CD4-positive, alpha-beta memory T cell (primary cell): ENCODE measurements at regions of chr3 and their contacts with region 1.

Region 1: DNA sequence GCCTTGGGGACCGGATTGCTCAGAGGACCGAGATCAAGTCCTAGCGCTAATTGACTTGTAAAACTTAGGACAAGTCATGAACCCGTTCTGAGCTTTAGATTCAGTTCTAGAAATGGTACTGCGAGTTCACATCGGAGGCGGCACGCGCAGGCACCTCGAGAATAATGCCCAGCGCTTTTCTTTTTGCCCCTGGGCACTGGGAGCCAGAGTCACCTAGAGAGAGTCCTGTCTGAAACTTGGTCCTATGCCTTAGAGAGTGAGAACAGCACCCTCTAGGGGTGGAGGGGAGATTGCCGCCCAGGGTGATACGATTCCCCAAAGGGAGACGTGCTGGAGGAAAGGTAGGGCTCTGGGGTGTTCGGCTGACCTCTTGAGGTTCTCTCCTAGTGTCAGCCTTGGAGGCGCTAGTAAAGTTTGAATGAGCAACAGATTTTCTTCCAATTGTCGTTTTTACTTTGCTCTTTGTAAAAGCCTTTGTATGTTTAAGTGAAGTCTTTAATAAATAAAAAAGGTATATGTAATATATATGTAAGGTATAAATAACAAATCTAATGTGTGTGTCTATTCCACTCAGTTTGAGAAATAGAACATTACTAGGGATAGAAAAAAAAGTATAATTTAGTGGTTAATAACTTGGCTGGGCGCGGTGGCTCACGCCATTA is 826 bp downstream of the EEF1AKMT4 start:
- DNase-seq: peak; percentile 82 to 92 (median 86)
- H3K4me3 ChIP-seq: peak overlapping the region; percentile 92 to 99
- H3K4me3 Mint-ChIP-seq: peak overlapping the region; percentile 88 to 99 (median 96)
- H3K27ac ChIP-seq: peak overlapping the region; percentile 66
- H3K27ac Mint-ChIP-seq: peak overlapping the region; percentile 46 to 100 (median 90)
- H3K4me1 ChIP-seq: peaks cover 11% of the 10 kb centered on the region
- H3K4me1 Mint-ChIP-seq: peaks cover 8 to 20% (median 12%) of the 10 kb centered on the region in 4 donors
- H3K27me3 ChIP-seq: no peaks in the 10 kb centered on the region
- H3K27me3 Mint-ChIP-seq: peaks cover 0 to 4% of the 10 kb centered on the region in 2 donors

Region 2: GRCh38 chr3:183099026-183099837 is 1151.1 kb before region 1 on chr3 and contains the start of gene MCCC1:
- CTCF ChIA-PET with region 1: no interaction called
- POLR2A ChIA-PET with region 1: no interaction called
- intact Hi-C with region 1: loop called (anchors 2 kb)
- DNase-seq: peak; percentile 96 to 99 (median 97)
- H3K4me3 ChIP-seq: peak within 1 kb of the TSS; percentile 85 to 96
- H3K4me3 Mint-ChIP-seq: peak within 1 kb of the TSS; percentile 96 to 99 (median 97)
- H3K27ac ChIP-seq: peak within 1 kb of the TSS; percentile 81
- H3K27ac Mint-ChIP-seq: peak within 1 kb of the TSS; percentile 97 to 98 (median 97)
- H3K4me1 ChIP-seq: peaks cover 22% of the 10 kb centered on the region
- H3K4me1 Mint-ChIP-seq: peaks cover 17 to 42% (median 30%) of the 10 kb centered on the region in 4 donors
- H3K27me3 ChIP-seq: no peaks in the 10 kb centered on the region
- H3K27me3 Mint-ChIP-seq: no peaks in the 10 kb centered on the region
- total RNA-seq, gene MCCC1: 27.0 to 29.9 TPM

Region 3: DNA sequence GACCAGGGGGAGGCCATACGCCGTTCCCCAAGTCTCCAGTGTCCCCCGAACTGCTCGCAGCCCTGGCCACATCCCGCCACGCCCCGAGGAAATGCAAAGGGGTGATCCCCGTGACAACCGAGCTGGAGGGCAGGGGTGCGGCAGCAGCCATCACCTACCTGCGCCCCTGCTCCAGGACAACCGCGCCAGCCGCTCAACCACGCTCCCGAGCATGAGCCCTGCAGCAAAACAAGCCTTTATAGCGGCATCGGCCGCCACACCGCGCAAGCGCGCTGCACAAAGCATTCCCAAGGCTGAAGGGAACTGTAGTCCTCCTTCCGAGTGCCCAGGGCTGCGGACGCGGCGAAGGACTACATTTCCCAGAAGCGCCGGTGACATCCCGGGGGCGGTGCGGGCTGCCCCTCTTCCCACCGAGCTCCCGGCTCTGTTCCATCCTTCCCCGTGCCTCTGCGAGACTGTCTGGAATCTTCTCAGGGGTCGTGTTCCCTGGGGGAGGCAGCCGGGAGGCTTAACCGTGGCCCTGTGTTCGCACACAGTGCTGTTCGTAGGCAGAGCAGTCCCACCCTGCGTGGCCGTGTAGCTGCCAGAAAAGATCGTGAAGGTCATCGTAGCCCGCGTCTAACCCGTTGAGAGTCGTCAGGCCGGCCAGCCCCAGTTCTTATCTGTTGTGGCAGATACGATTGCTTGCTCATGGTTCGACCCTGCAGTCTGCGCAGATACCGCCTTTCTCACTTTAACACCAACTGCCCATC is 232.4 kb before region 1 on chr3 and contains the start of gene ABCC5:
- CTCF ChIA-PET with region 1: interaction called, 3 read pairs
- POLR2A ChIA-PET with region 1: no interaction called
- intact Hi-C with region 1: loop called (anchors 5 kb)
- DNase-seq: peak; percentile 79 to 84 (median 82)
- H3K4me3 ChIP-seq: peak within 1 kb of the TSS; percentile 93 to 96
- H3K4me3 Mint-ChIP-seq: peak within 1 kb of the TSS; percentile 98 to 100 (median 100)
- H3K27ac ChIP-seq: peak within 1 kb of the TSS; percentile 43
- H3K27ac Mint-ChIP-seq: peak within 1 kb of the TSS; percentile 90 to 96 (median 93)
- H3K4me1 ChIP-seq: peaks cover 17% of the 10 kb centered on the region
- H3K4me1 Mint-ChIP-seq: peaks cover 16 to 35% (median 24%) of the 10 kb centered on the region in 4 donors
- H3K27me3 ChIP-seq: no peaks in the 10 kb centered on the region
- H3K27me3 Mint-ChIP-seq: peaks cover 6 to 8% of the 10 kb centered on the region in 2 donors
- total RNA-seq, gene ABCC5: 42.3 to 42.6 TPM

Region 4: GRCh38 chr3:184145111-184145524 is 105.2 kb before region 1 on chr3:
- CTCF ChIA-PET with region 1: interaction called, 14 read pairs
- POLR2A ChIA-PET with region 1: interaction called, 6 read pairs
- intact Hi-C with region 1: loop called (anchors 1 kb)
- DNase-seq: peak in 4 of 5 donors; percentile 25 to 30 (median 28)
- H3K4me3 ChIP-seq: no peak overlapping the region
- H3K4me3 Mint-ChIP-seq: no peak overlapping the region
- H3K27ac ChIP-seq: no peak overlapping the region
- H3K27ac Mint-ChIP-seq: peak overlapping the region in 1 of 7 donors; percentile 25
- H3K4me1 ChIP-seq: no peaks in the 10 kb centered on the region
- H3K4me1 Mint-ChIP-seq: no peaks in the 10 kb centered on the region
- H3K27me3 ChIP-seq: no peaks in the 10 kb centered on the region
- H3K27me3 Mint-ChIP-seq: no peaks in the 10 kb centered on the region

Region 5: GRCh38 chr3:184185461-184186308 is 64.6 kb before region 1 on chr3 and contains the start of gene ABCF3:
- CTCF ChIA-PET with region 1: interaction called, 7 read pairs
- POLR2A ChIA-PET with region 1: interaction called, 3 read pairs
- intact Hi-C with region 1: loop called (anchors 1 kb)
- DNase-seq: peak; percentile 98 to 100 (median 99)
- H3K4me3 ChIP-seq: peak within 1 kb of the TSS; percentile 87 to 98
- H3K4me3 Mint-ChIP-seq: peak within 1 kb of the TSS; percentile 98 to 99 (median 98)
- H3K27ac ChIP-seq: peak within 1 kb of the TSS; percentile 80
- H3K27ac Mint-ChIP-seq: peak within 1 kb of the TSS; percentile 92 to 99 (median 97)
- H3K4me1 ChIP-seq: peaks cover 30% of the 10 kb centered on the region
- H3K4me1 Mint-ChIP-seq: peaks cover 26 to 47% (median 36%) of the 10 kb centered on the region in 4 donors
- H3K27me3 ChIP-seq: no peaks in the 10 kb centered on the region
- H3K27me3 Mint-ChIP-seq: no peaks in the 10 kb centered on the region
- total RNA-seq, gene ABCF3: 122 to 124 TPM

Region 6: GRCh38 chr3:184261270-184261853 is 11.1 kb after region 1 on chr3 and contains the start of gene CAMK2N2:
- CTCF ChIA-PET with region 1: interaction called, 6 read pairs
- POLR2A ChIA-PET with region 1: interaction called, 16 read pairs
- intact Hi-C with region 1: loop called (anchors 1 kb)
- DNase-seq: peak; percentile 31 to 71 (median 36)
- H3K4me3 ChIP-seq: peak within 1 kb of the TSS; percentile 52 to 61
- H3K4me3 Mint-ChIP-seq: peak within 1 kb of the TSS; percentile 86 to 94 (median 90)
- H3K27ac ChIP-seq: no peak within 1 kb of the TSS
- H3K27ac Mint-ChIP-seq: peak within 1 kb of the TSS; percentile 0 to 90 (median 68)
- H3K4me1 ChIP-seq: peaks cover 25% of the 10 kb centered on the region
- H3K4me1 Mint-ChIP-seq: peaks cover 14 to 35% (median 18%) of the 10 kb centered on the region in 4 donors
- H3K27me3 ChIP-seq: no peaks in the 10 kb centered on the region
- H3K27me3 Mint-ChIP-seq: peaks cover 3 to 10% of the 10 kb centered on the region in 2 donors
- total RNA-seq, gene CAMK2N2: 0.25 TPM in 1 of 2 experiments, not detected in the other

Region 7: DNA sequence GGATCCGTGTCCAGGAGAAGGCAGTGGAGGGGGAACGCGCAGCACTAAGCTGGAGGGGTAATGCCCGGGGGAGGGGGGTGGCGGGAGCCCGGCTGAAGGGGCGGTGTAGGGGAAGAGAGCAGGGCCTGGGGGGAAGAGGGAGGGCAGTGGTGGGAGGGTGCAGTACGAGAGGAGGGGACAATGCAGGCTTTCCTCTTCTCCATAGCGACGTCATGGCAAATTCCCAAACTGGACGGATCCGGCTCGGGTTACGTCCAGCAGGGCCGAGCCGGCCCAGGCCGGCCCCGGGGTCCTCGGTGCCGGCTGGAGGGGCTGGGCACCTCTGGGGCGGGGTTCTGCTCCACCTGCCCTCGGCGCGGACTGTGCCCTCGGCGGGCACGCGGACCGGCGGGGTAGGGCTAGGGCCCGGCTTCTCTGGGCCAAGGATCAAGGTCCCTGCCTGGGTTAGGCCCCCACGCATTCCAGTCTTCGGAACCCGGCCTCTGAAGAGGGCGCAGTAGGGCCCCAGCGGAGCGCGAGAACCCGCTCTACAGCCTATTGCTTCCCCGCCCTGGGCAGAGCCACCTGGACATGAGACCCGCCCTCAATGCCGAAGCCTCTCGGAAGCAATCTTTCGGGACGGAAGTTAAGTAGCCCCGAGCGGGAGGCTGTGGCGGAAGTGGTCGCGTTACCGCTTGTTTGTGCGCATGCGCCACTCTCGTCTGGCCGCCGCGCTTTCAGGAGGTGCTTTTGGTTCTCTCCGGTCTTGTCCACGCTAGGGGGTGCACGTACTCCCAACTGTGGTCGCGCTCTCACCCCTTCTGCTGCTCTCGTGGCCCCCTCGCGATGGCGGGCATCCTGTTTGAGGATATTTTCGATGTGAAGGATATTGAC is 112.6 kb after region 1 on chr3:
- CTCF ChIA-PET with region 1: interaction called, 4 read pairs
- POLR2A ChIA-PET with region 1: interaction called, 3 read pairs
- intact Hi-C with region 1: loop called (anchors 2 kb)
- DNase-seq: peak; percentile 91 to 94 (median 92)
- H3K4me3 ChIP-seq: peak overlapping the region; percentile 81 to 92
- H3K4me3 Mint-ChIP-seq: peak overlapping the region; percentile 97 to 100 (median 99)
- H3K27ac ChIP-seq: peak overlapping the region; percentile 75
- H3K27ac Mint-ChIP-seq: peak overlapping the region; percentile 97 to 99 (median 98)
- H3K4me1 ChIP-seq: peaks cover 22% of the 10 kb centered on the region
- H3K4me1 Mint-ChIP-seq: peaks cover 16 to 42% (median 29%) of the 10 kb centered on the region in 4 donors
- H3K27me3 ChIP-seq: no peaks in the 10 kb centered on the region
- H3K27me3 Mint-ChIP-seq: no peaks in the 10 kb centered on the region

Region 8: DNA sequence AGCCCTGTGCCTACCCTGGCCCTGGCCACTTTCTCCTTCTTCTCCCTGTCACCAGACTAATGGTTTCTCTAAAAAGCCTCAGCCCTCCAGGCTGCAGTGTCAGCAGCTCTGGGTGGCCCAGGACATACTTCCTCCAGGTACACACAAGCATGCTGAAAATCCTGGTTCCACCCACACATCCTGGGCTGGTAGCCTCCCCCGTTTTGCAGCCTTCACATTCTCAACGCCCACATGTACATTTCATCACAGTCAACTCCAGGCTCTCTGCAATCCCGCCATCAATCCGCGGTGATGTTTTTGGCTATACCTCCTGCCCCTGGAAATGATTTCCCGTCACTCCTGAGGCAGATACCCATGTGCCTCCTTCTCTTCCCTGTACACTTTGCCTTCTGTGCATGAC is 402.2 kb after region 1 on chr3:
- CTCF ChIA-PET with region 1: no interaction called
- POLR2A ChIA-PET with region 1: no interaction called
- intact Hi-C with region 1: no loop called
- DNase-seq: no peak
- H3K4me3 ChIP-seq: no peak overlapping the region
- H3K4me3 Mint-ChIP-seq: no peak overlapping the region
- H3K27ac ChIP-seq: no peak overlapping the region
- H3K27ac Mint-ChIP-seq: no peak overlapping the region
- H3K4me1 ChIP-seq: no peaks in the 10 kb centered on the region
- H3K4me1 Mint-ChIP-seq: no peaks in the 10 kb centered on the region
- H3K27me3 ChIP-seq: no peaks in the 10 kb centered on the region
- H3K27me3 Mint-ChIP-seq: peaks cover 0 to 1% of the 10 kb centered on the region in 2 donors